K562 (cell line): ENCODE measurements at regions of chr13 and their contacts with region 1.

Region 1: DNA sequence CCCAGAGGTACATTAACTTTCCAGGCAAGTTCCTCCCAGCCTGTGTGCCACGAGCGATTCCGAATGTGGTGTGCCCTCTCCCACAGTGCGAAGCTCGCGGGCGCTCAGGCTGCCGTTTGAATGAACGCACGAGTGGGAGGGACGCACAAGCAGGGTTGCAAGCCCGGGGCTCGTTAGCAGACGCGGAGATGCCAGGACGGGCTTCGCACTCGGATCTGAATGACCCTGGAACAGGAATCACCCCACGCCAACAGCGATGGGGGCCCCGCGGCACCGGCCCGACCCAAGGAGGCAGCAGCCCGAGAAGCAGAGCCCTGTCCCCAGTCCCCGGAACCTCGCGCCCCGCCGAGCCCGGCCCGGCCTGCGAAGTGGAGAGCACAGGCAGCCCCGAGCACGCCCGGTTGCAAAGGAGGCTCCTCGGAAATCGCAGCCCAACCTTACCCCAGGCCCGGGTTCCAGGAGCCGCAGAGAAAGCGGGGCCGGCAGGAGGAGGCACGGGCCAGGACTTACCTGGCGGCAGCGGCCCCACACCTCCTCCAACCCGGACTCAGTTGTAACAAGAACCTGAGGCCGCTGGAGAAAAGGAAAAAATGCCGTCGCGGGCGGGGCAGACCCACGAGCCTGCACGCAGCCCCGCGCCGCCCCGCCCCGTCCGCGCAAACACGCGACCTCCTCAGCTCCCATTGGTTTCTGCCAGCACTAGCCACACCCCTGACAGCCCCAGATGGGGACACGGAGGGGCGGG is at the start of gene SLC25A30:
- DNase-seq: peak; percentile 78 to 91 (median 82)
- ATAC-seq: peak; percentile 96
- H3K4me3 ChIP-seq: peak within 1 kb of the TSS; percentile 66
- H3K27ac ChIP-seq: peak within 1 kb of the TSS; percentile 62
- H3K4me1 ChIP-seq: peaks cover 17 to 18% of the 10 kb centered on the region in 2 experiments; a peak in 4 of 5 replicates
- H3K27me3 ChIP-seq: no peaks in the 10 kb centered on the region
- CTCF ChIP-seq: no peak
- EP300 ChIP-seq: no peak
- POLR2A ChIP-seq: peak; percentile 61
- RAD21 ChIP-seq: no peak
- polyA plus RNA-seq, gene SLC25A30: 1.1 to 1.6 TPM

Region 2: GRCh38 chr13:45464687-45465453 is 46.9 kb after region 1 on chr13 and contains the start of gene COG3:
- CTCF ChIA-PET with region 1: no interaction called
- POLR2A ChIA-PET with region 1: interaction called, 3 read pairs
- in situ Hi-C with region 1: no loop called
- intact Hi-C with region 1: loop called (anchors 2 kb)
- DNase-seq: peak; percentile 71 to 93 (median 82)
- ATAC-seq: peak; percentile 98
- H3K4me3 ChIP-seq: peak within 1 kb of the TSS; percentile 93
- H3K27ac ChIP-seq: peak within 1 kb of the TSS; percentile 87
- H3K4me1 ChIP-seq: peaks cover 0 to 9% of the 10 kb centered on the region in 2 experiments; a peak in 3 of 5 replicates
- H3K27me3 ChIP-seq: no peaks in the 10 kb centered on the region
- CTCF ChIP-seq: peak; percentile 3 to 53 (median 8); a peak in 3 of 6 replicates
- EP300 ChIP-seq: peak; percentile 62; the same call in 1 of the 2 replicates
- POLR2A ChIP-seq: peak; percentile 86
- RAD21 ChIP-seq: 0 out of 4 replicates have a peak, but pooled peaks of 1 of the 2 experiments have one; percentile 15
- polyA plus RNA-seq, gene COG3: 3.9 to 4.3 TPM